HCT116 (cell line): ENCODE measurements at regions of chr5 and their contacts with region 1.

Region 1: DNA sequence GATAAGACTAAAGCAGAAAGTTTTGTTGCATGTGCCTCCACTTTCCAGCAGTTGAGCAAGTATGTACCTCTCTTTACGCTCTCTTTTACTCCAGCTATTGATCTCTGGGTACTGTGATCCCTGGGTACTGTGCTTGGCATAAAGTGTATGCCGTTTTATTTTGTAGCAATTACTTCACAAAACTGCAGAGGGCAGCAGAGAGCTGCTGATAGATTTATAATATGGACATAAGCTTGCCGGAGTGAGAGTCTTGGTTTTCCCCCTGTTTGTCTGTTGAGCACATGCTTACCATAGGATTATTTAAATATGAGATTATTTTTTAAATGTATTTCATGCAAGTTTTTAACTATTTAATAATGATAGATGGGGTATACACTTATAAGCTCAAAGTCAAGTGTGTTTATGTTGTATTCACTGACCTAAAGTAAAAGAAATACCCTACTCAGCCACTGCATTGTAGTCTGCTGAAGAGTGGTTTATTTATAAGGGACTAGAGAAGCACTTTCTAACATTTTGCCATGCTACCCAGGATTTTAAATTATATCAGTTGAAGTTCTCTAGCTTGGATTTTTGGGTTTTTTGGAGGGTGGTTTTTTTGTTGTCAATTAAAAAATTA is 13.0 kb downstream of the TTC1 start:
- DNase-seq: peak; percentile 31
- ATAC-seq: peak; percentile 93
- H3K4me3 ChIP-seq: no peak overlapping the region
- H3K27ac ChIP-seq: no peak overlapping the region
- H3K4me1 ChIP-seq: no peaks in the 10 kb centered on the region
- H3K27me3 ChIP-seq: no peaks in the 10 kb centered on the region
- CTCF ChIP-seq: peak; percentile 62 to 74 (median 70)
- POLR2A ChIP-seq: no peak
- RAD21 ChIP-seq: peak; percentile 83

Region 2: GRCh38 chr5:160008877-160009590 is 12.9 kb before region 1 on chr5 and contains the start of gene TTC1:
- CTCF ChIA-PET with region 1: interaction called, 20 read pairs
- POLR2A ChIA-PET with region 1: interaction called, 3 read pairs
- RAD21 ChIA-PET with region 1: no interaction called
- intact Hi-C with region 1: no loop called
- DNase-seq: peak; percentile 99
- ATAC-seq: peak; percentile 97
- H3K4me3 ChIP-seq: peak within 1 kb of the TSS; percentile 99
- H3K27ac ChIP-seq: peak within 1 kb of the TSS; percentile 40
- H3K4me1 ChIP-seq: peaks cover 9 to 12% of the 10 kb centered on the region in 2 experiments; a peak in 2 of 4 replicates
- H3K27me3 ChIP-seq: no peaks in the 10 kb centered on the region
- CTCF ChIP-seq: no peak
- POLR2A ChIP-seq: peak; percentile 85
- RAD21 ChIP-seq: no peak
- total RNA-seq, gene TTC1: 48.1 TPM

Region 3: GRCh38 chr5:160159991-160160792 is 138.3 kb after region 1 on chr5:
- CTCF ChIA-PET with region 1: interaction called, 10 read pairs
- POLR2A ChIA-PET with region 1: no interaction called
- RAD21 ChIA-PET with region 1: no interaction called
- intact Hi-C with region 1: loop called (anchors 5 kb)
- DNase-seq: no peak
- ATAC-seq: no peak
- H3K4me3 ChIP-seq: no peak overlapping the region
- H3K27ac ChIP-seq: no peak overlapping the region
- H3K4me1 ChIP-seq: peaks cover 7 to 9% of the 10 kb centered on the region in 2 experiments
- H3K27me3 ChIP-seq: no peaks in the 10 kb centered on the region
- CTCF ChIP-seq: no peak
- POLR2A ChIP-seq: no peak
- RAD21 ChIP-seq: no peak

Region 4: GRCh38 chr5:160199410-160199911 is 177.5 kb after region 1 on chr5:
- CTCF ChIA-PET with region 1: interaction called, 3 read pairs
- POLR2A ChIA-PET with region 1: no interaction called
- RAD21 ChIA-PET with region 1: no interaction called
- intact Hi-C with region 1: loop called (anchors 5 kb)
- DNase-seq: no peak
- ATAC-seq: peak; percentile 98
- H3K4me3 ChIP-seq: peak overlapping the region; percentile 28 to 40
- H3K27ac ChIP-seq: no peak overlapping the region
- H3K4me1 ChIP-seq: peaks cover 0 to 9% of the 10 kb centered on the region in 2 experiments; a peak in 2 of 4 replicates
- H3K27me3 ChIP-seq: no peaks in the 10 kb centered on the region
- CTCF ChIP-seq: peak; percentile 53 to 91 (median 74); a peak in 5 of 6 replicates
- POLR2A ChIP-seq: no peak
- RAD21 ChIP-seq: peak; percentile 84

Region 5: GRCh38 chr5:160390787-160391696 is 369.1 kb after region 1 on chr5:
- CTCF ChIA-PET with region 1: interaction called, 45 read pairs
- POLR2A ChIA-PET with region 1: no interaction called
- RAD21 ChIA-PET with region 1: interaction called in 1 of 2 experiments, 8 read pairs
- intact Hi-C with region 1: loop called (anchors 2 kb)
- DNase-seq: no peak
- ATAC-seq: peak; percentile 52; the same call in 1 of the 2 replicates
- H3K4me3 ChIP-seq: no peak overlapping the region
- H3K27ac ChIP-seq: no peak overlapping the region
- H3K4me1 ChIP-seq: no peaks in the 10 kb centered on the region
- H3K27me3 ChIP-seq: no peaks in the 10 kb centered on the region
- CTCF ChIP-seq: peak; percentile 24 to 68 (median 53); a peak in 4 of 6 replicates
- POLR2A ChIP-seq: no peak
- RAD21 ChIP-seq: peak; percentile 76